Activated naive CD8-positive, alpha-beta T cell treated with anti-CD3 and anti-CD28 coated beads, Interleukin-2, amount 10 ng/mL, durations not matched to agents 7 days and 5 days (primary cell): ENCODE measurements at regions of chr1 and their contacts with region 1.

Region 1: DNA sequence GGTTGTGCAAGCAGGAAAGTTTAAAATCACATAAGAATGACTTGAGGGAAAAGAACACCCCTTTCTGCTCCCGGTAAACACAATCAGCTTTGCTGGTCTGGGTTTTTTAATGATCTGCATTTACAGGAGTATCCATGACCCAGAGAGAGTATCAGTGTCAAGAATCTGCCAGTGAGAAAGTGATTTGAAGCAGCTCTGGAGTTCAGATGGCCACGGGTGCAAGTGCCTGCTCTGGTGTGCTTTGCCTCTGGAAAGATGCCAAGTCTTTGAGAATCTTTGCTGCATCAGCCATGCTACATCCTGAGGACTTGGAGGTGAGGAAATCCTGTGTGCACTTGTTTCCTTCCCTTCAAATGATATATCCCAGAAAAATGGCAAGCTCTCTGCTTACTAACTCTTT is 18.6 kb upstream of the MYSM1 start:
- DNase-seq: no peak
- ATAC-seq: peak; percentile 32
- H3K4me3 Mint-ChIP-seq: peak overlapping the region; percentile 47
- H3K27ac Mint-ChIP-seq: peak overlapping the region; percentile 63
- H3K4me1 Mint-ChIP-seq: peaks cover 25% of the 10 kb centered on the region
- H3K27me3 Mint-ChIP-seq: peaks cover 10% of the 10 kb centered on the region

Region 2: GRCh38 chr1:58633121-58633520 is 85.3 kb before region 1 on chr1:
- POLR2A ChIA-PET with region 1: no interaction called
- DNase-seq: no peak
- ATAC-seq: no peak
- H3K4me3 Mint-ChIP-seq: no peak overlapping the region
- H3K27ac Mint-ChIP-seq: no peak overlapping the region
- H3K4me1 Mint-ChIP-seq: no peaks in the 10 kb centered on the region
- H3K27me3 Mint-ChIP-seq: peaks cover 18% of the 10 kb centered on the region

Region 3: GRCh38 chr1:58699011-58699762 is 19.2 kb before region 1 on chr1:
- POLR2A ChIA-PET with region 1: interaction called, 10 read pairs
- DNase-seq: no peak
- ATAC-seq: no peak
- H3K4me3 Mint-ChIP-seq: peak overlapping the region; percentile 92
- H3K27ac Mint-ChIP-seq: peak overlapping the region; percentile 100
- H3K4me1 Mint-ChIP-seq: peaks cover 9% of the 10 kb centered on the region
- H3K27me3 Mint-ChIP-seq: no peaks in the 10 kb centered on the region

Region 4: GRCh38 chr1:58732087-58732775 is 13.8 kb after region 1 on chr1:
- POLR2A ChIA-PET with region 1: no interaction called
- DNase-seq: no peak
- ATAC-seq: no peak
- H3K4me3 Mint-ChIP-seq: no peak overlapping the region
- H3K27ac Mint-ChIP-seq: no peak overlapping the region
- H3K4me1 Mint-ChIP-seq: peaks cover 8% of the 10 kb centered on the region
- H3K27me3 Mint-ChIP-seq: no peaks in the 10 kb centered on the region